Activated CD8-positive, alpha-beta T cell treated with anti-CD3 and anti-CD28 coated beads for 36 hours (primary cell): ENCODE measurements at regions of chr9 and their contacts with region 1.

Region 1: GRCh38 chr9:36328798-36329411 is 70.7 kb upstream of the GNE start:
- DNase-seq: peak; percentile 67
- ATAC-seq: peak; percentile 85
- H3K4me3 Mint-ChIP-seq: no peak overlapping the region
- H3K27ac Mint-ChIP-seq: no peak overlapping the region
- H3K4me1 Mint-ChIP-seq: peaks cover 2% of the 10 kb centered on the region
- H3K27me3 Mint-ChIP-seq: no peaks in the 10 kb centered on the region
- CTCF ChIP-seq: peak; percentile 86

Region 2: DNA sequence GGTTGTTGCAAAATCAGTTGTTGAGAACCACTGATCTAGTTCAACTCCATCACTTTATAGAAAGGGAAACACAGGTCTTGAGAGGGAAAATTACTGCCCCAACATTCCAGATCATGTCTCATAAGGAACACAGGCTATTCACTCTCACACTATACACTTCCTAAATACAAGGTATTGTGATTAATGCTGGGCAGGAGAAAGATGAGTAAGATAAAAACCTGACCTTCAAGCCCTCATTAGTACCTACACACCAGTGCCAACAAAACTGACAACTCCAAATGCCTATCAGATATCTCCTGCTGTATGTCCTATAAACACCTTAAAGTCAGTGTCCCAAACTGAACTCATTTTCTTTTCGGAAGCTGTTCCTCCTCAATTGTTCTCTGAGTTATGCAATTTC is 78.8 kb before region 1 on chr9:
- CTCF ChIA-PET with region 1: interaction called, 45 read pairs
- POLR2A ChIA-PET with region 1: no interaction called
- intact Hi-C with region 1: loop called (anchors 2 kb)
- DNase-seq: no peak
- ATAC-seq: no peak
- H3K4me3 Mint-ChIP-seq: no peak overlapping the region
- H3K27ac Mint-ChIP-seq: peak overlapping the region; percentile 13
- H3K4me1 Mint-ChIP-seq: peaks cover 19% of the 10 kb centered on the region
- H3K27me3 Mint-ChIP-seq: no peaks in the 10 kb centered on the region
- CTCF ChIP-seq: no peak

Region 3: GRCh38 chr9:36317764-36318163 is 11.1 kb before region 1 on chr9:
- CTCF ChIA-PET with region 1: interaction called, 38 read pairs
- POLR2A ChIA-PET with region 1: interaction called, 4 read pairs
- intact Hi-C with region 1: no loop called
- DNase-seq: no peak
- ATAC-seq: no peak
- H3K4me3 Mint-ChIP-seq: no peak overlapping the region
- H3K27ac Mint-ChIP-seq: no peak overlapping the region
- H3K4me1 Mint-ChIP-seq: no peaks in the 10 kb centered on the region
- H3K27me3 Mint-ChIP-seq: peaks cover 5% of the 10 kb centered on the region
- CTCF ChIP-seq: no peak

Region 4: DNA sequence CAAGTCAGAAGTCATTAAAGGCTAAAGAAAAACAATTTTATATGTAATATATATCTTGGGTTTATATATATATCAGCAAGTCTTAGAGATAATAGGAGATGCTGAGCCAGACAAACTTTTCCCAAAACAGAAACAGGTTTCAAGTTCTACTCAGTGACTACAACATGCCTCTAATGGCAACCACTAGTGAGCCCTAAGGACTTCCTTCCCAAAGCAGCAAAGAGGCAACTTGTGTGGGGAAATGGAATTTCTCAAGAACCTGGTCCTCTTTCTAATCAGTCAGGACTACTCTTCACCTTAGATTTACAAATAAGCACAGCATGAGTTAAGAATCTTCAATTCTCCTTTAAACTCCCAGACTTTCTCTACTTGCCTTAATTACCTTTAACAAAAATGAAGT is 53.6 kb after region 1 on chr9:
- CTCF ChIA-PET with region 1: no interaction called
- POLR2A ChIA-PET with region 1: no interaction called
- intact Hi-C with region 1: no loop called
- DNase-seq: no peak
- ATAC-seq: no peak
- H3K4me3 Mint-ChIP-seq: peak overlapping the region; percentile 67
- H3K27ac Mint-ChIP-seq: peak overlapping the region; percentile 75
- H3K4me1 Mint-ChIP-seq: peaks cover 64% of the 10 kb centered on the region
- H3K27me3 Mint-ChIP-seq: no peaks in the 10 kb centered on the region
- CTCF ChIP-seq: no peak